T-cell (primary cell): ENCODE measurements at regions of chr12 and their contacts with region 1.

Region 1: DNA sequence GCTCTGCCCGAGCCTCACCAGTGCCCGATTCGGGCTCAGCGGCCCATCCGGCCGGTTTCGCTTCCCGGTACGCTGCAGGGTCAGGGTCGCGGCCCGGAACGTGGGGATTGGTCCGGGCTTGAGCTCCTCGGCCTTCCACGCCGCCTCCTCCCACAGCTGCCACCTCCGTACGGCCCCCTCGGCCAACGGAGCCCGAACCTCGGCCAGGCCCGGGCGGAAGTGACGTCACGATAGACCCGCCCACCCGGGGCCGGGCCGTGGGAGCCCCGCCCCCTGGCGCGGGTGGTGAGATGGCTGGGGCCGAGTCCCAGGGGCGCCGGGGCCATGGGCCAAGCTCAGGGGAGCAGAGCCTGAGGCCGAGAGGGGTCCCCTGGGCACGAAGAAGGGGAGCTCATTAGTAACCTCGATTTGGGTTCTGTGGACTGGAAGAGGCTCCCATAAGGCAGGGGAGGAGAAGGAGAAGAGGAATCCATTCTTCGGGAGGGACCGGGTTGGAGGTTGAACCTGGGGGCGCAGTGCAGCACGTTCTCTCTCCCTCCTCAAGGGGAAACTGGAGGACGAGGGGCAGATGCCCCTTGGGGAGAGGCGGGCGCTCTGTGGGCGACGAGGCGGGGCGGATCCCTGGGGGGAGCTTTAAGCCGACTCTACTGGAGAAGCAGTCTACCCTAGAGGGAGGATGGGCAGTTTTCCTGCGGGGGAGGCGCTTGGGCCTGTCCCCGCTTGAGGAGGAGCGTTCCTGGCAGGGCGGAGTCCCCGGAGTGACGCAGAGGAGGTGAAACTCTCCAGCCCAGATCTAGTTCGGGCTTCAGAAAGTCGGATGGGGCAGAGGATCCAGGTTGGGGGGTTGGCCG is at the start of gene MLF2:
- DNase-seq: peak; percentile 91 to 98 (median 95)
- ATAC-seq: peak; percentile 90 to 95 (median 94)
- H3K4me3 ChIP-seq: peak within 1 kb of the TSS; percentile 89 to 99
- H3K4me3 Mint-ChIP-seq: peak within 1 kb of the TSS; percentile 88 to 93 (median 91)
- H3K27ac ChIP-seq: peak within 1 kb of the TSS; percentile 99
- H3K27ac Mint-ChIP-seq: peak within 1 kb of the TSS; percentile 92 to 97
- H3K4me1 ChIP-seq: peaks cover 4 to 23% of the 10 kb centered on the region in 2 experiments
- H3K4me1 Mint-ChIP-seq: peaks cover 14 to 24% (median 17%) of the 10 kb centered on the region in 3 donors
- H3K27me3 ChIP-seq: peaks cover 0 to 6% of the 10 kb centered on the region in 2 experiments
- H3K27me3 Mint-ChIP-seq: no peaks in the 10 kb centered on the region
- total RNA-seq, gene MLF2: 83.3 to 125 (median 88.4) TPM

Region 2: DNA sequence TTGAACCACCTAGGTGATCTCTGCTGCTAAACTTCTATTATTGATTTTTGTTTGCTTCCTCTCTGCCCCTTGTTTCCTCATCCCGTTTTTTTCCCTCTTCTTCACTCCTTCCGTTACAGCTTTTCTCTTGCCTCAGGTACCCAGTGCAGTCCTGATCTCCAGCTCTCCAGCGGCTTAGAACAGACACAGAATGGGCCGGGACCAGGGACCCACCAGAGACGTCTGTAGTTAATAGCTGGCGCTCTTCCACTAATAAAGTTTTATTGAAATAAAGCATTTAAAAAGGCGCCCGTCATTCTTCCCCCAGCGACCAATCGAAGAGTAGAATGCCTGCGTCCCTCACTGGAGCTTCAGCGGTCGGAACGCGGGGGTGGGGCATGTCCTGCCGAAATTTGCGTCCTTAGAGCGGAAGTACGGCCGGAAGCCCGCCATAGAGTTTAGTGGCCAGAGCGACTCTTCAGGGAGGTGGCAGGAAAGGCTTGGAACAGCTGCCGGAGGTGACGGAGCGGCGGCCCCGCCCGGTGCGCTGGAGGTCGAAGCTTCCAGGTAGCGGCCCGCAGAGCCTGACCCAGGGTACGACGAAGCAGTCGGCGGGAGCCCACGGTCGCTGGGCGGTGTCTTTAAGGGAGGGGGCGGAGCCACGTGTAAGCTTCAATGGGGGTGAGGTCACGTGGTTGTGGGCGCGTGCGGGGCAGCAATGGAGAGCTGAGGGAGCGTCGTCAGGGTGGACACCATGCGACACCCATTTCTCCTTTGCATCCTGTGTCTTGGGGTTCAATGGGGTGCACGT is 29.3 kb before region 1 on chr12 and contains the start of gene COPS7A:
- CTCF ChIA-PET with region 1: interaction called in 1 of 2 experiments, 12 read pairs
- POLR2A ChIA-PET with region 1: interaction called in 1 of 2 experiments, 7 read pairs
- DNase-seq: peak; percentile 85 to 96 (median 90)
- ATAC-seq: peak; percentile 90
- H3K4me3 ChIP-seq: peak within 1 kb of the TSS; percentile 58 to 65
- H3K4me3 Mint-ChIP-seq: peak within 1 kb of the TSS; percentile 84 to 87 (median 84)
- H3K27ac ChIP-seq: peak within 1 kb of the TSS; percentile 83
- H3K27ac Mint-ChIP-seq: peak within 1 kb of the TSS; percentile 91 to 99
- H3K4me1 ChIP-seq: peaks cover 10 to 16% of the 10 kb centered on the region in 2 experiments
- H3K4me1 Mint-ChIP-seq: peaks cover 24 to 30% (median 29%) of the 10 kb centered on the region in 3 donors
- H3K27me3 ChIP-seq: no peaks in the 10 kb centered on the region
- H3K27me3 Mint-ChIP-seq: no peaks in the 10 kb centered on the region
- total RNA-seq, gene COPS7A: 18.5 to 33.1 (median 31.8) TPM

Region 3: DNA sequence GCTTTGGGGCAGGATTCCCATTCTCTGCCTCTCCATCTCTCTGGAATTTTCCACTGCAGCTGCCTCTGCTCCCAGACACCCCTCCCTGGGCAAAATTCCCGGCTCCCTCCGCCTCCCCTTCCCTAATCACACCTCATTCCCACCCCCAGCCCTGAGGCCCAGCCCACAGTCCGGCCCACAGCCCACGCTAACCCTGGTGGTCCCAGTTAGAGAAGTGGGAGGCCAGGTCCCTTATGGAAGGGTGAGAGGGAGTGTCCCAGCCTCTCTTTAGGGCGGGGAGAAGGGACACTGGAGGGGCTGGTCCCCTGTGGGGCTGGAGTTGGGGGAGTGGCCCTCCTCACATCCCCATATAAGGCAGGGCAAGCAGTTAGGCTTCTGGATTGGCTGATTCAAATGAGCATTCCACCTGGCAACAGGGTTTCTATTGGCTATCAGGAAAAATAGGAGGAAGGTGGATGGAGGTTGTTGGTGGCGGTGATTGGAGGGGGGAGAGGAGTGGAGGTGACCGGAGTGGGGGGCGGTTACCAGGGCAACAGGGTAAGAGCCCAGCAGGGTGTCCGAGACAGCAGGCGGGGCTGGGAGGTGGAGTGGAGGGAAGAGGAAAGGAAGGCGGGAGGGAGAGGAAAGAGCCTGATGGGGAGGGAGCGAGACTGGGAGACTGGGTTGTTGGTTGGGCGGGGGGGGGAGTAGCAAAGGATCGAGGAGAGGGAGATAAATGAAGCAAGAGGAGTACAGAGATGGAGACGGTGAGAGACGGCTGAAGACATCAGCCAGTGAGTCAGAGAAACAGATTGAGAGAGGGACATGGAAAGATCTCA is 11.1 kb after region 1 on chr12:
- CTCF ChIA-PET with region 1: interaction called, 14 to 22 read pairs
- POLR2A ChIA-PET with region 1: no interaction called
- DNase-seq: peak in 29 of 35 experiments; percentile 17 to 77 (median 49)
- ATAC-seq: peak; percentile 54 to 80 (median 58)
- H3K4me3 ChIP-seq: peak overlapping the region in 1 of 2 donors; percentile 10
- H3K4me3 Mint-ChIP-seq: peak overlapping the region; percentile 13 to 76 (median 31)
- H3K27ac ChIP-seq: no peak overlapping the region
- H3K27ac Mint-ChIP-seq: peak overlapping the region in 1 of 2 donors; percentile 43
- H3K4me1 ChIP-seq: peaks cover 9 to 44% of the 10 kb centered on the region in 2 experiments
- H3K4me1 Mint-ChIP-seq: peaks cover 25 to 40% (median 35%) of the 10 kb centered on the region in 3 donors
- H3K27me3 ChIP-seq: peaks cover 0 to 49% of the 10 kb centered on the region in 2 experiments
- H3K27me3 Mint-ChIP-seq: peaks cover 33 to 37% of the 10 kb centered on the region in 2 donors

Region 4: GRCh38 chr12:6779708-6780432 is 26.7 kb after region 1 on chr12:
- CTCF ChIA-PET with region 1: interaction called, 6 to 10 read pairs
- POLR2A ChIA-PET with region 1: no interaction called
- DNase-seq: no peak
- ATAC-seq: no peak
- H3K4me3 ChIP-seq: no peak overlapping the region
- H3K4me3 Mint-ChIP-seq: peak overlapping the region in 1 of 3 donors; percentile 98
- H3K27ac ChIP-seq: no peak overlapping the region
- H3K27ac Mint-ChIP-seq: peak overlapping the region in 1 of 2 donors; percentile 34
- H3K4me1 ChIP-seq: peaks cover 32 to 75% of the 10 kb centered on the region in 2 experiments
- H3K4me1 Mint-ChIP-seq: peaks cover 44 to 63% (median 51%) of the 10 kb centered on the region in 3 donors
- H3K27me3 ChIP-seq: peaks cover 0 to 15% of the 10 kb centered on the region in 2 experiments
- H3K27me3 Mint-ChIP-seq: peaks cover 5 to 12% of the 10 kb centered on the region in 2 donors

Region 5: GRCh38 chr12:6792522-6793201 is 39.5 kb after region 1 on chr12:
- CTCF ChIA-PET with region 1: interaction called, 6 to 11 read pairs
- POLR2A ChIA-PET with region 1: interaction called in 1 of 2 experiments, 3 read pairs
- DNase-seq: peak in 32 of 35 experiments; percentile 36 to 75 (median 58)
- ATAC-seq: peak; percentile 76 to 82 (median 82)
- H3K4me3 ChIP-seq: peak overlapping the region; percentile 71 to 88
- H3K4me3 Mint-ChIP-seq: peak overlapping the region; percentile 86 to 94 (median 92)
- H3K27ac ChIP-seq: peak overlapping the region; percentile 70
- H3K27ac Mint-ChIP-seq: peak overlapping the region; percentile 96
- H3K4me1 ChIP-seq: peaks cover 14 to 64% of the 10 kb centered on the region in 2 experiments
- H3K4me1 Mint-ChIP-seq: peaks cover 62 to 82% (median 71%) of the 10 kb centered on the region in 3 donors
- H3K27me3 ChIP-seq: peaks cover 0 to 3% of the 10 kb centered on the region in 2 experiments
- H3K27me3 Mint-ChIP-seq: peaks cover 0 to 2% of the 10 kb centered on the region in 2 donors

Region 6: DNA sequence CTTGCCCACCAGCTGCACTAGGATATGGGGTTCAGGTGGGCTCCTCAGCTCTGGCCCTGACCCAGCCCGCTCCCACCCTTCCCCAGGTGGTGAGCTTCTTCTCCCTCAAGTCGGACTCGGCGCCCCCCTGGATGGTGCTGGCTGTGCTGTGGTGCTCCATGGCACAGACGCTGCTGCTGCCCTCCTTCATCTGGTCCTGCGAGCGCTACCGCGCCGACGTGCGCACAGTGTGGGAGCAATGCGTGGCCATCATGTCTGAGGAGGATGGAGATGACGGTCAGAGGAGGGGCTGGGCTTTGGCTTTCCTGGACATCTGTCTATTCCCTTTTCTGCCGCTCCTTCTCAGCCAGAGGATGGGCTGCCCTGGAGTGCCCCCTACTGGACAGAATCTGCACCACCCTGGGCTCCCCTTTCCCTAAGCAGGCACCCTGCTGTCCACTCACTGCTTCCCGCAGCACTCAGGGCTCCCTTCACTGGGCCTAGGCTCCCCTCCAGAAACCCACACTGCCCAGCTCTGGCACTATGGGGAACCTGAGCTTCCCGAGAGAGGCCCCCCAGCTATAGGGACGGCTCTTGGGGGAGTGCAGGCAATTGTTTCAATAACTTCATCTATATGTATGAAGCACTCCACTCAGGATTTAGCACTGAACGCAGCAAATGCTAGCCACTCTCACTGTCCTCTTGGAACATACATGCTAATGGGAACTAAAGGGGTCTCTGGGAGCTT is 72.4 kb after region 1 on chr12:
- CTCF ChIA-PET with region 1: interaction called, 7 to 26 read pairs
- POLR2A ChIA-PET with region 1: interaction called in 1 of 2 experiments, 3 read pairs
- DNase-seq: peak; percentile 36 to 87 (median 71)
- ATAC-seq: peak; percentile 46 to 69 (median 50)
- H3K4me3 ChIP-seq: no peak overlapping the region
- H3K4me3 Mint-ChIP-seq: no peak overlapping the region
- H3K27ac ChIP-seq: no peak overlapping the region
- H3K27ac Mint-ChIP-seq: peak overlapping the region in 1 of 2 donors; percentile 34
- H3K4me1 ChIP-seq: peaks cover 3 to 47% of the 10 kb centered on the region in 2 experiments
- H3K4me1 Mint-ChIP-seq: peaks cover 29 to 52% (median 33%) of the 10 kb centered on the region in 3 donors
- H3K27me3 ChIP-seq: peaks cover 0 to 91% of the 10 kb centered on the region in 2 experiments
- H3K27me3 Mint-ChIP-seq: peaks cover 16 to 64% of the 10 kb centered on the region in 2 donors

Region 7: GRCh38 chr12:6833189-6833890 is 80.2 kb after region 1 on chr12:
- CTCF ChIA-PET with region 1: interaction called, 8 to 34 read pairs
- POLR2A ChIA-PET with region 1: no interaction called
- DNase-seq: no peak
- ATAC-seq: no peak
- H3K4me3 ChIP-seq: no peak overlapping the region
- H3K4me3 Mint-ChIP-seq: no peak overlapping the region
- H3K27ac ChIP-seq: no peak overlapping the region
- H3K27ac Mint-ChIP-seq: peak overlapping the region in 1 of 2 donors; percentile 16
- H3K4me1 ChIP-seq: peaks cover 0 to 17% of the 10 kb centered on the region in 2 experiments
- H3K4me1 Mint-ChIP-seq: peaks cover 9 to 16% (median 14%) of the 10 kb centered on the region in 3 donors
- H3K27me3 ChIP-seq: peaks cover 0 to 30% of the 10 kb centered on the region in 2 experiments
- H3K27me3 Mint-ChIP-seq: peaks cover 0 to 22% of the 10 kb centered on the region in 2 donors